CD8-positive, alpha-beta T cell (primary cell): ENCODE measurements at regions of chr10 and their contacts with region 1.

Region 1: DNA sequence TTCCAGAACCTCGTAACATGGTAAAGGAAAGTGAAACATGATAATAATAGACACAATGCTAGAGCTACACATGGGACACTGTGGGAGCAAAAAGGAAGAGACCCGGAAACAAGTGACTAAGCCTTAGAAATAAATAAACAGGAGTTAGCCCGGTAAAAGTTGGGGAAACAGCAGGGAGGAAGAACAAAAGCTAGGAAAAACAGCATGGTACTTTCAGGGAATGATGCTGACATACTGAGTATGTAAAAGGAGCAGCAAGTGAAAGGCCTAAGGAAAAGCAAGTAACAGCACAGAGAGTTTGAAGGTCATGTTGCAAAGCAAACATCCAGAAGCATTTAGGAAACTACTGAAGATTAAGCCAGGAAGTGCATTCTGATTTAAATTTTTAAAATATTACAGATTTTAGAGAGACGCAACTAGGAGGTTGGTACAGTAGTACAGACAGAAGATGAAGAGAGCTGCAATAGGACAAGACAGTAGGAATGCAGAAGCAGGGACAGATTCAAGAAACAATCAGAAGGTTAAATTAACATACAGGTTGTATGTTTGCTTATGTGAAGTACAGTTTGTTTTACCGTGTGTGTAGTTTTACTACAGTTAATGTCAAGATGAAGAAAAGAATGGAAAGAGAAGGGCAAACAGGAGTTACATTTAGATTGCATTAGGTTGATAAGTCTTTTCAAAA is 63.7 kb downstream of the ARHGAP12 start:
- DNase-seq: no peak
- ATAC-seq: no peak
- H3K4me3 ChIP-seq: no peak overlapping the region
- H3K4me3 Mint-ChIP-seq: no peak overlapping the region
- H3K27ac ChIP-seq: no peak overlapping the region
- H3K27ac Mint-ChIP-seq: no peak overlapping the region
- H3K4me1 ChIP-seq: peaks cover 4% of the 10 kb centered on the region
- H3K4me1 Mint-ChIP-seq: peaks cover 26% of the 10 kb centered on the region
- H3K27me3 ChIP-seq: no peaks in the 10 kb centered on the region
- H3K27me3 Mint-ChIP-seq: no peaks in the 10 kb centered on the region
- CTCF ChIP-seq: no peak

Region 2: GRCh38 chr10:30467651-30468338 is 1397.2 kb before region 1 on chr10:
- CTCF ChIA-PET with region 1: no interaction called
- POLR2A ChIA-PET with region 1: no interaction called
- intact Hi-C with region 1: no loop called
- DNase-seq: no peak
- ATAC-seq: no peak
- H3K4me3 ChIP-seq: no peak overlapping the region
- H3K4me3 Mint-ChIP-seq: no peak overlapping the region
- H3K27ac ChIP-seq: no peak overlapping the region
- H3K27ac Mint-ChIP-seq: no peak overlapping the region
- H3K4me1 ChIP-seq: peaks cover 6% of the 10 kb centered on the region
- H3K4me1 Mint-ChIP-seq: peaks cover 5% of the 10 kb centered on the region
- H3K27me3 ChIP-seq: no peaks in the 10 kb centered on the region
- H3K27me3 Mint-ChIP-seq: no peaks in the 10 kb centered on the region
- CTCF ChIP-seq: no peak

Region 3: DNA sequence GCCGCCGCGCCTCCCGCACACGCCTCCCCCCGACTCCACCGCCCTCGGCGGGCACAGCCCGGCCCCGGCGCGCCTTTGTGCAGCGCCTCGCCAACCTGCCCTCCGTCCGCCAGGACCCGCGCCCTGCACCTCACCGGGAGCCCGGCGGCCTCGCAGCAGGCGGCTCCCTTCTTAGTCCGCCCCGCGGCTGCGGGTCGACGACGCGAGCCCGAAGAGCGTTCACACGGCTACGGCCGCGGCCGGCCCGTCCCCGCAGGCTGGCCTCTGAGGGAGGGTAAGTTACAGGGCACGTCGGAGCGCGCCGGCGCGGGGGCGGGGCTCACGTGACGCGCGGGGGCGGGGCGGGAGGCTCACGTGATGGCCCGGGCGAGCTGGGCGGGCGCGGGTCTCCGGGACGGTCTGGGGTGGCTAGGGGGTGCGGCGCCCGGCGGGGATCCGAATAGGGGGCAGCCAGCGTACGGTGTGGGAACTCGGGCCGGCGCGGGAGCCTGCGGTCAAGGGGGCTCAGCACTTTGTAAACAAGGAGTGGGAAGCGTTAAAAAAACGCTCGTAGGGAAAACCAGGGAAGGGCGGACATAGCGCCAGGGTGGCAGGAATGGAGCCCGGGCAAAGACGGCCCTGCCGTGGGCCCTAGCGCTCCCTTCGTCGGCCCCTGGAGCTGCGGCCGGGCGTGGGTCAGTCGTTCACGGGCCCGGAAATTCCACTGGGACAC is 63.7 kb after region 1 on chr10 and contains the start of gene ARHGAP12:
- CTCF ChIA-PET with region 1: interaction called, 11 read pairs
- POLR2A ChIA-PET with region 1: interaction called, 3 read pairs
- intact Hi-C with region 1: loop called in 1 of 2 experiments (anchors 5 kb)
- DNase-seq: peak; percentile 70 to 92 (median 84)
- ATAC-seq: peak; percentile 67
- H3K4me3 ChIP-seq: peak within 1 kb of the TSS; percentile 90 to 95
- H3K4me3 Mint-ChIP-seq: peak within 1 kb of the TSS; percentile 94
- H3K27ac ChIP-seq: peak within 1 kb of the TSS; percentile 65 to 87
- H3K27ac Mint-ChIP-seq: peak within 1 kb of the TSS; percentile 83
- H3K4me1 ChIP-seq: peaks cover 41% of the 10 kb centered on the region
- H3K4me1 Mint-ChIP-seq: peaks cover 49% of the 10 kb centered on the region
- H3K27me3 ChIP-seq: no peaks in the 10 kb centered on the region
- H3K27me3 Mint-ChIP-seq: no peaks in the 10 kb centered on the region
- CTCF ChIP-seq: no peak
- total RNA-seq, gene ARHGAP12: 15.7 to 15.9 TPM

Region 4: GRCh38 chr10:32005050-32005449 is 140.1 kb after region 1 on chr10:
- CTCF ChIA-PET with region 1: interaction called, 46 read pairs
- POLR2A ChIA-PET with region 1: interaction called, 3 read pairs
- intact Hi-C with region 1: loop called (anchors 1 kb)
- DNase-seq: peak in 5 of 9 experiments; percentile 16 to 69 (median 39)
- ATAC-seq: peak; percentile 80
- H3K4me3 ChIP-seq: no peak overlapping the region
- H3K4me3 Mint-ChIP-seq: no peak overlapping the region
- H3K27ac ChIP-seq: no peak overlapping the region
- H3K27ac Mint-ChIP-seq: peak overlapping the region; percentile 47
- H3K4me1 ChIP-seq: no peaks in the 10 kb centered on the region
- H3K4me1 Mint-ChIP-seq: peaks cover 4% of the 10 kb centered on the region
- H3K27me3 ChIP-seq: no peaks in the 10 kb centered on the region
- H3K27me3 Mint-ChIP-seq: no peaks in the 10 kb centered on the region
- CTCF ChIP-seq: peak; percentile 55

Region 5: GRCh38 chr10:32190890-32191491 is 326.0 kb after region 1 on chr10:
- CTCF ChIA-PET with region 1: no interaction called
- POLR2A ChIA-PET with region 1: no interaction called
- intact Hi-C with region 1: loop called in 1 of 2 experiments (anchors 10 kb)
- DNase-seq: peak in 2 of 9 experiments; percentile 52 to 65
- ATAC-seq: peak; percentile 51
- H3K4me3 ChIP-seq: no peak overlapping the region
- H3K4me3 Mint-ChIP-seq: no peak overlapping the region
- H3K27ac ChIP-seq: no peak overlapping the region
- H3K27ac Mint-ChIP-seq: no peak overlapping the region
- H3K4me1 ChIP-seq: no peaks in the 10 kb centered on the region
- H3K4me1 Mint-ChIP-seq: peaks cover 2% of the 10 kb centered on the region
- H3K27me3 ChIP-seq: no peaks in the 10 kb centered on the region
- H3K27me3 Mint-ChIP-seq: no peaks in the 10 kb centered on the region
- CTCF ChIP-seq: peak; percentile 92

Region 6: DNA sequence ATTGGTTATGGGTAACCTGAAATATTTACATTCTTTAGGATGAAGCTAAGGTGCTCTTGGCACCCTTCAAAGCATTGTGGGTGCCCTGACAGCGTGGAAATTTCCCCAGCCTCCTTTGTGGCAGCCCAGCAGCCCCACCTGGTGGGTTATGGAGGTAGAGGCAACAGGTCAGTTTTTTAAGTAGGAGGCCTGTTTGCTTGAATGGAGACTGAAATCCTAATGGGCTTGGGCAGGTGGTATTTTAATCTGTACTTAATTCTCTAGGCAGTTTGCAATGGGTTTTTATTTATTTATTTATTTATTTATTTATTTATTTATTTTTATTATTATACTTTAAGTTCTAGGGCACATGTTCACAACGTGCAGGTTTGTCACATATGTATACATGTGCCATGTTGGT is 342.6 kb after region 1 on chr10:
- CTCF ChIA-PET with region 1: no interaction called
- POLR2A ChIA-PET with region 1: no interaction called
- intact Hi-C with region 1: loop called in 1 of 2 experiments (anchors 5 kb)
- DNase-seq: peak; percentile 21 to 66 (median 54)
- ATAC-seq: peak; percentile 65
- H3K4me3 ChIP-seq: no peak overlapping the region
- H3K4me3 Mint-ChIP-seq: no peak overlapping the region
- H3K27ac ChIP-seq: no peak overlapping the region
- H3K27ac Mint-ChIP-seq: no peak overlapping the region
- H3K4me1 ChIP-seq: no peaks in the 10 kb centered on the region
- H3K4me1 Mint-ChIP-seq: no peaks in the 10 kb centered on the region
- H3K27me3 ChIP-seq: no peaks in the 10 kb centered on the region
- H3K27me3 Mint-ChIP-seq: no peaks in the 10 kb centered on the region
- CTCF ChIP-seq: peak; percentile 50

Region 7: DNA sequence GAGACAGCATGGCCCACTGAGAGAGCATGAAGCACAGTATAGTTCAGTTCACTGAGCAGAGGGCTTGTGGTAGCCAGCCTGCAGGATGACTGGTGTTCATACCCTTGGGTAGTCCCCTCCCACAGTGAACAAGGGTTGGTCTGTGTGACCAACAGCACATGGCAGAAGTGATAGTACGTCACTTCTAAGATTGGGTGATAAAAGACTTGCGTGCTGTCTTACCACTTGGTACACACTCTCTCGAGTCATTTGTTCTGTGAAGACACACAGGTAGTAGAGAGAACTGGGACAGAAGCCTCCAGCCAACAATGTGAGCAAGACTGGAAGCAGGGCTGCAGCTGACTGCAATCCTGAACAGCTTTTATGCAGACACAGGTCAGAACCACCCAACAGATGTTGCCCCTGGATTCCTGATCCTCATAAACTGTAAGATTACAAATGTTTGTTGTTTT is 467.3 kb after region 1 on chr10:
- CTCF ChIA-PET with region 1: no interaction called
- POLR2A ChIA-PET with region 1: no interaction called
- intact Hi-C with region 1: loop called in 1 of 2 experiments (anchors 10 kb)
- DNase-seq: peak; percentile 32 to 92 (median 69)
- ATAC-seq: peak; percentile 96
- H3K4me3 ChIP-seq: no peak overlapping the region
- H3K4me3 Mint-ChIP-seq: peak overlapping the region; percentile 73
- H3K27ac ChIP-seq: peak overlapping the region; percentile 12 to 55
- H3K27ac Mint-ChIP-seq: peak overlapping the region; percentile 90
- H3K4me1 ChIP-seq: peaks cover 91% of the 10 kb centered on the region
- H3K4me1 Mint-ChIP-seq: peaks cover 94% of the 10 kb centered on the region
- H3K27me3 ChIP-seq: no peaks in the 10 kb centered on the region
- H3K27me3 Mint-ChIP-seq: no peaks in the 10 kb centered on the region
- CTCF ChIP-seq: no peak

Region 8: GRCh38 chr10:32367793-32368453 is 502.9 kb after region 1 on chr10:
- CTCF ChIA-PET with region 1: no interaction called
- POLR2A ChIA-PET with region 1: no interaction called
- intact Hi-C with region 1: loop called in 1 of 2 experiments (anchors 5 kb)
- DNase-seq: peak; percentile 49 to 87 (median 78)
- ATAC-seq: peak; percentile 73
- H3K4me3 ChIP-seq: no peak overlapping the region
- H3K4me3 Mint-ChIP-seq: peak overlapping the region; percentile 23
- H3K27ac ChIP-seq: no peak overlapping the region
- H3K27ac Mint-ChIP-seq: peak overlapping the region; percentile 78
- H3K4me1 ChIP-seq: peaks cover 38% of the 10 kb centered on the region
- H3K4me1 Mint-ChIP-seq: peaks cover 65% of the 10 kb centered on the region
- H3K27me3 ChIP-seq: no peaks in the 10 kb centered on the region
- H3K27me3 Mint-ChIP-seq: no peaks in the 10 kb centered on the region
- CTCF ChIP-seq: peak; percentile 86